GM10248 (cell line): ENCODE measurements at regions of chr20 and their contacts with region 1.

Region 1: GRCh38 chr20:35954200-35954906 is at the start of gene SCAND1:
- DNase-seq: peak; percentile 96
- CTCF ChIP-seq: peak; percentile 100

Region 2: GRCh38 chr20:35171753-35172433 is 782.5 kb before region 1 on chr20 and contains the start of gene PROCR:
- CTCF ChIA-PET with region 1: no interaction called
- POLR2A ChIA-PET with region 1: no interaction called
- DNase-seq: peak; percentile 50
- CTCF ChIP-seq: no peak

Region 3: DNA sequence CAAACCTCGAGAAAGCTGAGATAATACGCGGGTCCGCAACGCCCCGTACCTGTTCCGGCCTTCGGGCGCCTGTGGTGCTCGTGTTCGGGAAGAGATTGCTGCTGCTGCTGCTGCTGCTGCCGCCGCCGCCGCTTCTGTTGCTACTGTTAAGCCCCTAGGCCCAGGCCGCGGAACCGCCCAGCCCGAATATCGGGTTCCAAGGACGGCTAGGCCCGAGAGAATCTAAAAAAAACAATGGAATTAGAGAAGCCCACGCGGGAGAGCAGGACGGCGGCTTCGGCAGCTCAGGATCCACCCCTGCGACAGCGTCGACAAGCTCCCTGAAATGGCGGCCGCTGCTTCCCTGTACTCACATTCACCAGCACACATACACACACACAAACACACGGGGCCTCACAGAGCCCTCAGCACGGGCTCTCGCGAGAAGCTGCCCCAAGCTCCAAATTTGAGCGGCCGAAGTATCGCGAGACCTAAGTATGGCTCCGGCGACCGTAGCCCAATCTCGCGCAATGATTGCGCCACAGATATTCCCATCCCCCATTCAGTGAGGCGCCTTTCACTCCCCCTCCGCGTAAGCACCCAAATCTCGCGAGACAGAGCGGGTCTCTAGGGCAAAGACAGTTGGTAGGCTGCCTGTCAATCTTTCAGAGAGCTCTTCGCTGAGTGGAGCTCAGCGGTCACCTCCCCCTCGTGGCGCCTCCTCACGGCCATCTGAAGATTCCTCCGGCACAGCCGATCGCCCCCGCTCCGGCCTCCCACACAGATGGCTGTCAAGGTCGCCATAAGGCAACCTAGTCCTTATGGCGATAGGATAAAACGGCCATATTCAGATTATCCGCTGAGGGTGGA is 212.2 kb before region 1 on chr20 and contains the start of gene RBM39:
- CTCF ChIA-PET with region 1: no interaction called
- POLR2A ChIA-PET with region 1: interaction called, 10 read pairs
- DNase-seq: peak; percentile 95
- CTCF ChIP-seq: peak; percentile 7

Region 4: DNA sequence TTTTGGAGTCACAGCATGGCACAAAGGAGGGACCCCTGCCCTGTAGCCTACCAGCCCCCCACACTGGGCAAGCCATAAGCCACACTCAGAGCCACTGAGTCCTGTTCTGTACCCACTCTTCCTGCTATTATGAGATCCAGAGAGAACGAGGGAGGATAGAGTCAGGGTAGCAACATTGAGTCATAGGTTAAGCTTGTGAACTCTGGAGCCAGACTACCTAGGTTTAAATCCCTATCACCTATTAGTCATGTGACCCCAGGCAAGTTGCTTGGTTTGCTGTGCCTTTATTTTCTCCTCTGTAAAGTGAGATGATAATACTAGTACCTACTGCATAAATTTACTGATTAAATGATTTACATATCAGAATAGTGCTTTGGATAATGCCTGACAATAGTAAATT is 14.6 kb after region 1 on chr20:
- CTCF ChIA-PET with region 1: interaction called, 43 read pairs
- POLR2A ChIA-PET with region 1: interaction called, 3 read pairs
- DNase-seq: no peak
- CTCF ChIP-seq: no peak

Region 5: GRCh38 chr20:35985806-35986205 is 31.5 kb after region 1 on chr20:
- CTCF ChIA-PET with region 1: interaction called, 23 read pairs
- POLR2A ChIA-PET with region 1: no interaction called
- DNase-seq: no peak
- CTCF ChIP-seq: no peak

Region 6: GRCh38 chr20:36116807-36117441 is 162.6 kb after region 1 on chr20:
- CTCF ChIA-PET with region 1: no interaction called
- POLR2A ChIA-PET with region 1: no interaction called
- DNase-seq: no peak
- CTCF ChIP-seq: no peak

Region 7: GRCh38 chr20:36273414-36274180 is 319.2 kb after region 1 on chr20:
- CTCF ChIA-PET with region 1: no interaction called
- POLR2A ChIA-PET with region 1: no interaction called
- DNase-seq: peak; percentile 51
- CTCF ChIP-seq: peak; percentile 53